A549 (cell line): ENCODE measurements at regions of chr20 and their contacts with region 1.

Region 1: DNA sequence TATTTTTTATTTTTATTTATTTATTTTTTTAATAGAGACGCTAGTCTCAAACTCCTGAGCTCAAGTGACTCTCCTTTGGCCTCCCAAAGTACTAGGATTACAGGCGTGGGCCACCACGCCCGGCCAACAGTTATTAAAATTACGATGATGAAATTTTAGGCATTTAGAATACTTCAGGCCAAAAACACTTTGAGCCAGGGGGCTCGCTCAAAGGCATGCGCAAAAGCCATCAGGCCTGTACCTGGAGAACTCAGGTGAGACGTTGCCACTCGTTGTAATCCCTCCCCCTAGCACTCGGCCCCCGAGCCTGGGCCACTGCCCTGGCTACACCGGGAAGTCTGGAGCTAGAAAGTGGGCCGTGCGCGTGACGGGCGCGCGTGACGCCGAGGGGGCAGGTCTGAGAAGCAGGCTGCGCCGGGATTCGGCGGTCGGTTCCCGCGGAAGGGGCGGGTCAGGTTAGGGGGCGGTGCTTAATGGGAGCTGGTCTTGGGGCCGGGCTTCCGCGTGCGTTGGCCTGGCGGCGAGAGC is 337 bp upstream of the CBFA2T2 start:
- DNase-seq: peak; percentile 94 to 97
- ATAC-seq: peak; percentile 95 to 98
- H3K4me3 ChIP-seq: peak overlapping the region; percentile 75
- H3K27ac ChIP-seq: peak overlapping the region; percentile 87 to 90
- H3K4me1 ChIP-seq: peaks cover 14% of the 10 kb centered on the region
- CTCF ChIP-seq: no peak
- EP300 ChIP-seq: no peak
- POLR2A ChIP-seq: peak; percentile 95
- RAD21 ChIP-seq: no peak

Region 2: DNA sequence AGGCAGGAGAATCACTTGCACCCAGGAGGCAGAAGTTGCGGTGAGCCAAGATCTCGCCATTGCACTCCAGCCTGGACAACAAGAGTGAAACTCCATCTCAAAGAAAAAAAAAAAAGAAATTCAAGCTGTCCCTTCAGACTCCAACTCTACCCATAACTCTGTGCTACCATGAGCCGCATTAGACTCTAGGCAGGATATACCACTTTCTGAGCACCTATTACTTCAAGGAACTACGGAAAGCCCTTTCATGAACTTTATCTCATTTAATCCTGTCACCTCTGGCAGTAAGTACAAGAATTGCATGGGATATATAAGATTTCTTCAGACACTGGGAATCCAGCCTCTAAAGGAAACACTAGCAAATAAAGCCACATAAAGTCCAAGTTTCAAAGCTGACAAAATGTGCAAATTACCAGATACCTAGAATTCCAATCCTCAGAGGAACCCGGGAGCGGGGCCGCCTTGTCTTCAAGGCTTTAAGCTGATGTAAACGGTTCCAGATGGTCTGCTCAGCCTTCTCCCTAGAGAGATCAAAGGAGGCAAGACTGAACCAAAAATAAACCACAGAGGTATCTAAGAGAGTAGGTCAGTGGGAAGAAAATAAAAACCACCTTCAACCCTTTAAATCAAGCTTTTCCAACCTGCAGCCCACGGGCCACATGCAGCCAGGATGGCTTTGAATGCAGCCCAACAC is 97.7 kb before region 1 on chr20:
- CTCF ChIA-PET with region 1: no interaction called
- POLR2A ChIA-PET with region 1: no interaction called
- DNase-seq: no peak
- ATAC-seq: no peak
- H3K4me3 ChIP-seq: no peak overlapping the region
- H3K27ac ChIP-seq: no peak overlapping the region
- H3K4me1 ChIP-seq: peaks cover 13% of the 10 kb centered on the region
- CTCF ChIP-seq: no peak
- EP300 ChIP-seq: no peak
- POLR2A ChIP-seq: no peak
- RAD21 ChIP-seq: no peak

Region 3: GRCh38 chr20:33443512-33444239 is 45.9 kb before region 1 on chr20 and contains the start of gene SNTA1:
- CTCF ChIA-PET with region 1: no interaction called
- POLR2A ChIA-PET with region 1: interaction called, 10 read pairs
- DNase-seq: peak; percentile 84 to 86
- ATAC-seq: peak; percentile 84 to 95
- H3K4me3 ChIP-seq: peak within 1 kb of the TSS; percentile 83
- H3K27ac ChIP-seq: peak within 1 kb of the TSS; percentile 72 to 89
- H3K4me1 ChIP-seq: peaks cover 5% of the 10 kb centered on the region; the same call in 2 of the 3 replicates
- CTCF ChIP-seq: no peak
- EP300 ChIP-seq: no peak
- POLR2A ChIP-seq: peak; percentile 24
- RAD21 ChIP-seq: no peak
- polyA plus RNA-seq, gene SNTA1: 5.6 and 6.5 TPM in 2 replicates